Aorta (tissue), 5 donors: ENCODE measurements at regions of chr6 and their contacts with region 1.

Region 1: DNA sequence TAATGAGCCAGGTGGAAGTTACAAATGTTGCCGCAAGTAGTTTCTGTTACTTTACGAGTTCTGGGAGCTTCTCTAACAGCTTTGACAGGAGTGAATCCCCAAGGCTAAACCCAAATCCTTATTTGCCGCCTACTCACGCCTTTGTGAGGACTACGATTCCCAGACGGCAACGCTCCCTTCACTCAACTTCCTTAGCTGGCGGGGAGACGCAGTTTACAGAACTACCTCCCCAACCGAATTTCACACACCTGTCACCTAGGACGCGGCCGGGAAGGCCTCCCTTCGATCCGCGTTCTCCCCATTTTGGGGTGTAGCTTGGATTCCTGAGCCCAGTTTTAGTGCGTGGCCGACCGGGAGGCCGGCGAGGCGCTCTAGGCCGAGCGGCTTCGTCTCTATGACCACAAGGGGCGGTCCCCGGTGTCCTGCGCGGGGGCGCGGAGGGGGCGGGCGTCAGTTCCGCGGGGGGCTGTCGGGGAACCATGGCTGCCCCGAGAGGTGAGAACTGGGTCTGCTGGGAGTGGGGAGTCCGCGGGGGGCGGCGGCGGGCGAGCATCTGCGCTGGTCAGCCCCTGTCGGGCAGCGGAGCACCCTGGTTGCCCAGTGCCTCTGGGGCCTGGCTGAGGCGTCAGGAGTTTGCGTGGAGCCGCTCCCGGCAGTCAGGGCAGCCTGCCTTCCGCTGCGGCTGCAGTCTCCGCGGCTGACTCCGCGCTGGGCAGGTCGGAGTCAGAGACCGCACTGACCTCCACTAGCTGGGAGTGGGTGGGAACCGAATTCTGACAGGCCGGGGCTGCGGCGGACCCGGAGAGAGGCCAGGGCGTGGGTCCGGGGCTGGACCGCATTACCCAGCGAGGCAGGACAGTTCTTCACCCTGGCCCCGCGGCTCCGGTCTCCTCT is at the start of gene SLC35A1:
- DNase-seq: peak; percentile 89 to 96
- ATAC-seq: peak; percentile 99
- H3K4me3 ChIP-seq: peak within 1 kb of the TSS; percentile 68 to 97
- H3K27ac ChIP-seq: peak within 1 kb of the TSS in 1 of 2 donors; percentile 82
- H3K4me1 ChIP-seq: no peaks in the 10 kb centered on the region
- H3K27me3 ChIP-seq: no peaks in the 10 kb centered on the region
- total RNA-seq, gene SLC35A1: 15.0 to 20.0 TPM

Region 2: DNA sequence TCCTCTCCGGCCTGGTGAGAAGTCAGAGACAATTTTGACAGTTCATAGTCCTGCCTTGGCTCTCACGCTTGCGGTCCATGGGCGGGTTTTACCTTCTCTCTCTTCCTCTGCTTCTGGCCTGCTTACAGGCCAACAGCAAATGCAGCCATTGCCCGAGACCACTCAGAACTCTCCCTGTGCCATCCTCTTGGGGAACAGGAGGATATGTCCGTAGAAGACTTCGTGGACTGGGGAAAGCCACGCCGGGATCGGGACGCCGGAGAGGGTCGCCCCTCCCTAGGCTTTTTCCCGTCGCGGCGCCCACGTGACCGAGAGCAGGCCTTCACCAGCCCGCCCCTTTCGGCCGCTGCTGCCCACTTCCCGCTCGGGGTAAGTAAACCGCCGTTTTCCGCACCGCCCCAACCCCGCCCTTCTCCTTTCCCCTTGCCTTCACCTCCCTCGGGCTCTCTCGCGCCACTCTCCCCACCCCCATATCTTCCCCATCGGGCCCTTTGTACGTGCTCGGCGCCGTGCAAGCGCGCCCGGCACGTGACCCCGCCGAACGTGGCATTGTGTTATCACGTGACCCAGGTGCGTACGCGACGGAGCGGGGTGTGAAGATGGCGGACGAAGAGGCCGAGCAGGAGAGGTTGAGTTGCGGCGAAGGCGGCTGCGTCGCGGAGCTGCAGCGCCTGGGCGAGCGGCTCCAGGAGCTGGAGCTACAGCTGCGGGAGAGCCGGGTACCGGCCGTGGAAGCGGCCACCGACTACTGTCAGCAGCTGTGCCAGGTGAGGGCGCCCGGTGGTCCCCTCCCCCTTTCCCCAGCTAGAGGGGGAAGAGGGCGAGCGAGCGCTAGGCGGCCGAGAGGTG is 317.6 kb before region 1 on chr6 and contains the start of gene ZNF292:
- intact Hi-C with region 1: loop called in 1 of 2 experiments (anchors 10 kb)
- DNase-seq: peak; percentile 98
- ATAC-seq: peak; percentile 95
- H3K4me3 ChIP-seq: peak within 1 kb of the TSS; percentile 54 to 71
- H3K27ac ChIP-seq: peak within 1 kb of the TSS; percentile 62 to 85
- H3K4me1 ChIP-seq: peaks cover 0 to 3% of the 10 kb centered on the region in 2 donors
- H3K27me3 ChIP-seq: no peaks in the 10 kb centered on the region
- total RNA-seq, gene ZNF292: 57.9 to 71.6 TPM

Region 3: GRCh38 chr6:87322304-87323212 is 150.2 kb before region 1 on chr6 and contains the start of gene SMIM8:
- intact Hi-C with region 1: loop called in 1 of 2 experiments (anchors 2 kb)
- DNase-seq: peak; percentile 88 to 94
- ATAC-seq: peak; percentile 100
- H3K4me3 ChIP-seq: peak within 1 kb of the TSS; percentile 70 to 94
- H3K27ac ChIP-seq: peak within 1 kb of the TSS in 1 of 2 donors; percentile 45
- H3K4me1 ChIP-seq: no peaks in the 10 kb centered on the region
- H3K27me3 ChIP-seq: no peaks in the 10 kb centered on the region
- total RNA-seq, gene SMIM8: 11.2 to 13.8 TPM

Region 4: GRCh38 chr6:87393022-87393622 is 79.7 kb before region 1 on chr6:
- intact Hi-C with region 1: loop called in 1 of 2 experiments (anchors 5 kb)
- DNase-seq: no peak
- ATAC-seq: peak; percentile 78
- H3K4me3 ChIP-seq: no peak overlapping the region
- H3K27ac ChIP-seq: no peak overlapping the region
- H3K4me1 ChIP-seq: no peaks in the 10 kb centered on the region
- H3K27me3 ChIP-seq: no peaks in the 10 kb centered on the region

Region 5: GRCh38 chr6:87407901-87408720 is 64.7 kb before region 1 on chr6 and contains the start of gene CFAP206:
- intact Hi-C with region 1: loop called (anchors 2 to 5 kb)
- DNase-seq: peak; percentile 85 to 93
- ATAC-seq: peak; percentile 96
- H3K4me3 ChIP-seq: peak within 1 kb of the TSS; percentile 55 to 58
- H3K27ac ChIP-seq: peak within 1 kb of the TSS in 1 of 2 donors; percentile 34
- H3K4me1 ChIP-seq: no peaks in the 10 kb centered on the region
- H3K27me3 ChIP-seq: no peaks in the 10 kb centered on the region
- total RNA-seq, gene CFAP206: 0.45 TPM in 1 of 2 donors, not detected in the other

Region 6: GRCh38 chr6:87436435-87436834 is 36.3 kb before region 1 on chr6:
- intact Hi-C with region 1: no loop called
- DNase-seq: no peak
- ATAC-seq: peak; percentile 81
- H3K4me3 ChIP-seq: no peak overlapping the region
- H3K27ac ChIP-seq: no peak overlapping the region
- H3K4me1 ChIP-seq: no peaks in the 10 kb centered on the region
- H3K27me3 ChIP-seq: no peaks in the 10 kb centered on the region

Region 7: GRCh38 chr6:87543696-87544473 is 71.1 kb after region 1 on chr6:
- intact Hi-C with region 1: no loop called
- DNase-seq: no peak
- ATAC-seq: no peak
- H3K4me3 ChIP-seq: no peak overlapping the region
- H3K27ac ChIP-seq: no peak overlapping the region
- H3K4me1 ChIP-seq: no peaks in the 10 kb centered on the region
- H3K27me3 ChIP-seq: no peaks in the 10 kb centered on the region

Region 8: GRCh38 chr6:87701676-87702588 is 229.2 kb after region 1 on chr6 and contains the start of gene AKIRIN2:
- intact Hi-C with region 1: loop called in 1 of 2 experiments (anchors 2 kb)
- DNase-seq: peak; percentile 98
- ATAC-seq: peak; percentile 97
- H3K4me3 ChIP-seq: peak within 1 kb of the TSS; percentile 90 to 91
- H3K27ac ChIP-seq: peak within 1 kb of the TSS; percentile 50 to 97
- H3K4me1 ChIP-seq: no peaks in the 10 kb centered on the region
- H3K27me3 ChIP-seq: no peaks in the 10 kb centered on the region
- total RNA-seq, gene AKIRIN2: 38.5 to 43.5 TPM

Region 9: GRCh38 chr6:87944541-87944954 is 471.8 kb after region 1 on chr6:
- intact Hi-C with region 1: no loop called
- DNase-seq: peak; percentile 90 to 94
- ATAC-seq: peak; percentile 91
- H3K4me3 ChIP-seq: no peak overlapping the region
- H3K27ac ChIP-seq: peak overlapping the region; percentile 64 to 79
- H3K4me1 ChIP-seq: peaks cover 0 to 13% of the 10 kb centered on the region in 2 donors
- H3K27me3 ChIP-seq: no peaks in the 10 kb centered on the region